Adrenal gland (tissue), 19 donors: ENCODE measurements at regions of chr3 and their contacts with region 1.

Region 1: GRCh38 chr3:159260049-159260662 is 458.3 kb downstream of the MFSD1 start:
- DNase-seq: peak; percentile 33 to 74 (median 52)
- H3K4me3 ChIP-seq: no peak overlapping the region
- H3K27ac ChIP-seq: no peak overlapping the region
- H3K4me1 ChIP-seq: no peaks in the 10 kb centered on the region
- H3K27me3 ChIP-seq: no peaks in the 10 kb centered on the region
- CTCF ChIP-seq: peak; percentile 57 to 88 (median 80)
- POLR2A ChIP-seq: no peak

Region 2: DNA sequence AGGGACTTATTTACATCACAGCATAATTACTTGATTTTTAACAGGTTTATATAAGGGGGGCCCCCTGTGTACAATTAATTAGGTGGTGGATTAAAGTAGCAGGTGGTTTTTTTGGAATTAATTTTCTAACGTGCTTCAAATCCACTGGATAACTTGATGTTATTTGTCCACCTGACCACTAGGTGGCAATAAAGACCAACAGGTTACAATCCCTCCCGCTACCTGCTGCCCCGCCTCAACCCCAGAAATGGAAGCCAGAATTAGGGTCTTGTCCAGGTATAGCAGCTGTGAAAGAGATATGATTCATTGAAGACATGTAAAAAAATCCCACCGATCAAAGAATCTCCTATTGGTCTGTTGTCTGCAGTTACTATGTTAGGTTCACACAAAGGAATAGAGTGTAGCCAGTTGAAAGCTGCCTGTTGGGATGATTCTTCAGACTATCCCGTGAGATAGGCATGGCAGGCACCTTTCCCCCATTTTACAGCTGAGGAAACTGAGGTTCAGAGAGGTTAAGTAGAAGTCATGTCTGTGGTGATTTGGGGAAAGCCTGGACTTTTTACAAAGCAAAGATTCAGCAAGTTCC is 414.3 kb before region 1 on chr3:
- intact Hi-C with region 1: loop called (anchors 5 kb)
- DNase-seq: peak in 1 of 7 donors; percentile 16
- H3K4me3 ChIP-seq: no peak overlapping the region
- H3K27ac ChIP-seq: no peak overlapping the region
- H3K4me1 ChIP-seq: no peaks in the 10 kb centered on the region
- H3K27me3 ChIP-seq: no peaks in the 10 kb centered on the region
- CTCF ChIP-seq: peak; percentile 52 to 75 (median 64)
- POLR2A ChIP-seq: no peak

Region 3: GRCh38 chr3:158918008-158918407 is 342.1 kb before region 1 on chr3:
- intact Hi-C with region 1: loop called (anchors 5 to 10 kb)
- DNase-seq: peak; percentile 28 to 81 (median 48)
- H3K4me3 ChIP-seq: no peak overlapping the region
- H3K27ac ChIP-seq: no peak overlapping the region
- H3K4me1 ChIP-seq: no peaks in the 10 kb centered on the region
- H3K27me3 ChIP-seq: no peaks in the 10 kb centered on the region
- CTCF ChIP-seq: peak; percentile 22 to 60 (median 52)
- POLR2A ChIP-seq: no peak

Region 4: DNA sequence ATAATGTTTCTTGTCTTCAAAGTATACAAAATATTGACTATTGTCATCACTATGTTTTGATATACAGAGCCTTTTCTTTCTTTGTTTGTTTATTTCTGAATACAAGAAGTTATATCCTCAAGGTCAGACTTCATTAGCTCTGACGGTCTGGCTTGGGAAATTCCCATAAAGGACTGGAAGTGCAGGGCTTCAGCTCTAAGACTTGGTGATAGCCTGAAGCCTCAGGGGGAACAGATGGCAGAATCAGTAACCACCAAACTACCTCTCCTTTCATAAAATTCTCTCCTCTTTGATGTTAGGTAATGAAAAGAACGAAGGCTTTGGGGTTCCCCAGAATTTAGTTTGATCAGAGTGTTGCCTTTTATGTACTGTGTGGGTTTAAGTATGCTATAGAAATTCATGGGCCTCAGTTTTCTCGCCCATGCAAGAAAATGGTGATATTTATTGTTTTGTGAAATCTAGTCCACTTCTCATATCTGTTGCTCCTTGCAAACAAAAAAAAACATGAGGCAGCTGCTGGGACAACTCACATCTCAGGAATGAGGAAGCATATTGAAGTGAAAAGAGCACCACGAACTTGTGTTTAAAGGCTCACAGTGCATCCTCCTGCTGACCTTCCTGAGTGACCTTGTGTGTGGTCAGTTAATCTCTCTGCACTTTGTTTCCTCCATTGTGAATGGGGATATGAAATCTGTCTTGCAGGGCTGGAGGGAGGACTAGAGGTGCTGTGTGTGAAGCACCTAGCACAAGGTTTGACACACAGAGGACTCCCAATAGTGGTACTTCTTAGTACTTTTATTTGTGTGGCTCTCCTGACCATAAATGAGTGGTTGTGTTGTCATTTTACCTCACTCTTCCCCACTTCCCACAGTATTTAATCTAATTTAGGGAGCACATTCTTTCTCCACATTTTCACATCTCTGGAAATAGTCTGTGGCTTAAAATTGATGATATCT is 158.7 kb after region 1 on chr3:
- intact Hi-C with region 1: no loop called
- DNase-seq: no peak
- H3K4me3 ChIP-seq: no peak overlapping the region
- H3K27ac ChIP-seq: no peak overlapping the region
- H3K4me1 ChIP-seq: no peaks in the 10 kb centered on the region
- H3K27me3 ChIP-seq: no peaks in the 10 kb centered on the region
- CTCF ChIP-seq: no peak
- POLR2A ChIP-seq: no peak

Region 5: DNA sequence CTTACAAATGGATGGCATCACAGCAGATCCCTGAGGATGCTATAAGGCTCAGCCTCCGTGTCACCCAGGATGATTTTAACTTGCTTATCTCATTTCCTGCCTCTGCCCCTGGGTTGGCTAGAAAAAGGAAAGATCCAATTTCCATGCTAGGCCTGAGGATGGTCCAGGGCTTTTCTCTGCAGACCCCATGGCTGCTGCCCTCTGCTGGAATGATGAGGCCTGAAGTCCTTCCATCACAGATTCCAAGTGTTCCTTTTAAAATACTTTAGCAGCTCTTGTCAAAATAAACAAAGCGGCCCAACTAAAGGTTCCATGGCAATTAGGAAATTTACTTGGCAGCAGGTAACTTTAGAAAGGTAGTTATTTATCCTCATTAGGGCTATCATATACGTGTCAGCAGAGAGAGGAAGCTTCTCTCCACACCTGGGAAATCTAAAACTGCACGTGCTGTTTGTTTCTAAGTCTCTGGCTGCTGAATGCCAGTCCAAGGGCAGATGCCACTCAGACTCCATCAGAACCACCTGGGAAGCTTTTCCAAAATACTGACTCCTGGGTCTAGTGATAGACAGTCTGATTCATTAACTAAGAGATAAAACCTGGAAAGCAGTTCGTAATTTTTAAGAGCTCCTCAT is 326.5 kb after region 1 on chr3:
- intact Hi-C with region 1: loop called in 1 of 2 experiments (anchors 10 kb)
- DNase-seq: peak in 4 of 7 donors; percentile 7 to 23 (median 14)
- H3K4me3 ChIP-seq: no peak overlapping the region
- H3K27ac ChIP-seq: no peak overlapping the region
- H3K4me1 ChIP-seq: no peaks in the 10 kb centered on the region
- H3K27me3 ChIP-seq: no peaks in the 10 kb centered on the region
- CTCF ChIP-seq: peak in 4 of 6 experiments; percentile 17 to 38 (median 22)
- POLR2A ChIP-seq: no peak

Region 6: DNA sequence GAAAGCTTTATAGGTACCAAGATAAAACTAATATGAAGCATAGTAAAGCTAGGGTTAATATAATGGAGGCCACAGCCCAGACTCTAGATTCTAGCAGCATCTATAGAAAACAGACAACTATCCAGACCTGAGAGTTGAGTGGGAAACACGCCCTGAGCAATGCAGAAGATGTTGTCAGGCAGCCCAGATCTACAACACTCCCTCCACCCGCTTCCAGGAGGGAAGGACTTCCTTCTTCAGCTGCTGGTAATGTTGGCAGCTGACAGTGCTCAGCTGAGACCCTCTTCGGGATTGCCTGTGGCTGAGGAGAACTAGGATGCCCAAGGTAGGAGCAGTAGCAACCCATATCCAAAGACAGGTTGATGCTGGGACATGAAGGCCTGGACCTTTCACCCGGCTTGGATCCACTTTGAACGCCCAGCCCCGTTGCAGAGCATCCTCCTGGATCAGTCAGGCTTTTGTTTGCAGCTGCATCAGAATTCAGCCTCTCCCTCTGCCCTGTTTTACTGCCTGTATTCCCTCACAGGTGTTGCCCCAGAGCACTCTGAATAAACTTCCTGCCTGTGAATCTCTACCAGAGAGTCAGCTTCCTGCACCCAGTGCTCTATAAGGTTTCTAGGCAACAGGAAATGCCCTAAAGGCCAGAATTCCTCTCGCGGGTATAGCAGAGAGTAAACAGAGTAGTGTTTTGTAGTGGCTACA is 553.8 kb after region 1 on chr3:
- intact Hi-C with region 1: loop called in 1 of 2 experiments (anchors 10 kb)
- DNase-seq: no peak
- H3K4me3 ChIP-seq: no peak overlapping the region
- H3K27ac ChIP-seq: no peak overlapping the region
- H3K4me1 ChIP-seq: no peaks in the 10 kb centered on the region
- H3K27me3 ChIP-seq: no peaks in the 10 kb centered on the region
- CTCF ChIP-seq: no peak
- POLR2A ChIP-seq: no peak